Thyroid gland (tissue), 4 donors: ENCODE measurements at regions of chr1 and their contacts with region 1.

Region 1: GRCh38 chr1:179121159-179121938 is 39.5 kb downstream of the TOR3A start:
- DNase-seq: peak; percentile 19 to 42
- H3K4me3 ChIP-seq: no peak overlapping the region
- H3K27ac ChIP-seq: peak overlapping the region in 1 of 3 donors; percentile 7
- H3K4me1 ChIP-seq: peaks cover 0 to 5% of the 10 kb centered on the region in 2 donors
- H3K27me3 ChIP-seq: no peaks in the 10 kb centered on the region
- CTCF ChIP-seq: peak in 5 of 6 experiments; percentile 33 to 56 (median 49)
- POLR2A ChIP-seq: no peak

Region 2: GRCh38 chr1:179190861-179191260 is 69.5 kb after region 1 on chr1:
- intact Hi-C with region 1: loop called (anchors 10 kb)
- DNase-seq: no peak
- H3K4me3 ChIP-seq: no peak overlapping the region
- H3K27ac ChIP-seq: peak overlapping the region; percentile 11 to 43 (median 34)
- H3K4me1 ChIP-seq: no peaks in the 10 kb centered on the region
- H3K27me3 ChIP-seq: no peaks in the 10 kb centered on the region
- CTCF ChIP-seq: no peak
- POLR2A ChIP-seq: no peak